ENCODE measurements at regions of chr14 and their contacts with region 1.

Region 1: DNA sequence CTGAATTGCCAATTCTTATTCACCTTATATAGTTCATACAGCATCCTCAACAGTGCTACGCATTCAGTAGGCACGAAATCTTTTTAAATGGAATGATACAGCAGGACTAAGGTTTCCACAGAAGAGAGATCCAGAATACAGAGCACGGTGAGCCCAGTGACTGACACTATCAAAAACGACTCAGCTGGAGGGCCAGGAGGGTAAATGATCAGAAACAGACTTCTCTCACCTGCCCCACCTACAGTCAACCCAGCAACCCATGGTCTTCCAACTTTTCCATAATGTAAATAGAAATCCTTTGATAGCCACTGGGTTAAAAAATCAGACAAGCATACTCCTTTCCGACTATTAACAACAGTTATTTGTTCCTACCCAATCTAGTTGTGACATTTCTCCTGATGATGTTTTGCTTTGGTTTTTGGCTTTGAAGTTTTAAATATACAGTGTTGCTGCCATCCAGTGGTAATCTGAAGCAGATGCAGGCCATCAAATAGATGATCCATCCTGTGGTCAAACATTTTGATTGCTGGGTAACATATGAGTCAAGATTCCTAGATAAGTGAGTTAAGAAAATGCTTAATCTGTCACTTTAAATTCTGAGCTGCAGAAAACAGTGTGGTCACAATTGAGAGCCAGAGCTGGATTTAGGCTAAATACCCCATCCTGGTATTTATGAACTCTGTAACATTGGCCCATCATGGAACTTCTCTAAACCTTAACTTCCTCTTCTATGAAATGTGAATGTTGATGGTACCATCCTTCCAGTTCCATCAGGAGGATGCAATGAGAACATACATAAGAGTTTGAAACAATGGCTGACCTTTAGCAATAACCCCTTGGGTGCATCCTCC is 42.0 kb downstream of the GPHB5 start:
- ATAC-seq: peak in 6 of 8 experiments; percentile 21 to 64 (median 50)
- H3K4me3 ChIP-seq: no peak overlapping the region
- H3K27ac ChIP-seq: no peak overlapping the region
- H3K4me1 ChIP-seq: peaks cover 0 to 8% of the 10 kb centered on the region in 2 donors

Region 2: GRCh38 chr14:62162998-62163589 is 1113.6 kb before region 1 on chr14:
- in situ Hi-C with region 1: loop called in 6 of 9 experiments (anchors 10 to 25 kb)
- ATAC-seq: peak in 6 of 8 experiments; percentile 55 to 76 (median 64)
- H3K4me3 ChIP-seq: no peak overlapping the region
- H3K27ac ChIP-seq: no peak overlapping the region
- H3K4me1 ChIP-seq: no peaks in the 10 kb centered on the region

Region 3: GRCh38 chr14:62179367-62180018 is 1097.2 kb before region 1 on chr14:
- in situ Hi-C with region 1: loop called in 7 of 9 experiments (anchors 25 kb)
- ATAC-seq: peak; percentile 47 to 91 (median 63)
- H3K4me3 ChIP-seq: no peak overlapping the region
- H3K27ac ChIP-seq: no peak overlapping the region
- H3K4me1 ChIP-seq: no peaks in the 10 kb centered on the region

Region 4: GRCh38 chr14:63174760-63175211 is 101.9 kb before region 1 on chr14:
- in situ Hi-C with region 1: loop called in 1 of 9 experiments (anchors 10 kb)
- ATAC-seq: peak in 7 of 8 experiments; percentile 45 to 95 (median 61)
- H3K4me3 ChIP-seq: no peak overlapping the region
- H3K27ac ChIP-seq: no peak overlapping the region
- H3K4me1 ChIP-seq: no peaks in the 10 kb centered on the region

Region 5: DNA sequence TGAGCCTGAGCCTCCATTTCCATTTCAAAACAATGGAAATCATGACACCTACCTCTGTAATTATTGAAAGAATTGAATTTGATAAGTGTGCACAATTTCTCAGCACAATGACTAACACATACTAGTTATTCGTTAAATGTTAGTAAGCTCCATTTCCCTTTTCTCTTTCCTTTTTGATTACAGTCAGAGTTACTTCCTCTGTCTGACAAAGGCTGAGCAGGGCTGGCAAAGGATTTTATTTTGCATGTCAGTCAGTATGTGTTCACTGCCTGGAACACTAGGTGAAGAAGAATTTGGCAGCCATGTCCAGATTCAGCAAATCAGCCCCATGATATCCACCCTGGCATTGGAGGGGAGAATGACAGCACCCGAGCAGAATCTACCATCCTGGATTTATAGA is 84.6 kb before region 1 on chr14:
- in situ Hi-C with region 1: no loop called
- ATAC-seq: no peak
- H3K4me3 ChIP-seq: no peak overlapping the region
- H3K27ac ChIP-seq: no peak overlapping the region
- H3K4me1 ChIP-seq: no peaks in the 10 kb centered on the region